ENCODE measurements at regions of chr5 and their contacts with region 1.

Region 1: DNA sequence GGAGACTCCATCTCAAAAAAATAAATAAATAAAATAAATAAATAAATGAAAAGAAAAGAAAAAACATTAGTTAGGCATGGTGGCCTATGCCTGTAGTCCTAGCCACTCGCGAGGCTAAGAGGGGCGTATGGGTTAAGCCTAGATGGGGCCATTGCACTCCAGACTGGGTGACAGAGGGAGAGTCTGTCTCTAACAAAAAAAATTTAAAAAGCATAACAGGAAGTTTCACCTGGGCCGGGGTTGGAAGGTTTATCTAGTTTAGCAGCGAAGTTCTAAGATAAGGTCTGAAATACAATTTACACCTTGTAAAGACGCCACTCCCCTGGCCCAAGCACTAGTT is 18.0 kb downstream of the ZMAT2 start:
- DNase-seq: no peak
- H3K4me3 ChIP-seq: peak overlapping the region; percentile 66
- H3K27ac ChIP-seq: peak overlapping the region; percentile 91
- H3K4me1 ChIP-seq: 0 out of 2 replicates have a peak, but pooled peaks cover 5% of the 10 kb centered on the region
- H3K27me3 ChIP-seq: no peaks in the 10 kb centered on the region
- CTCF ChIP-seq: no peak

Region 2: GRCh38 chr5:140244525-140245025 is 473.6 kb before region 1 on chr5:
- CTCF ChIA-PET with region 1: no interaction called
- POLR2A ChIA-PET with region 1: no interaction called
- intact Hi-C with region 1: loop called (anchors 5 kb)
- DNase-seq: peak; percentile 77 to 82
- H3K4me3 ChIP-seq: no peak overlapping the region
- H3K27ac ChIP-seq: no peak overlapping the region
- H3K4me1 ChIP-seq: peaks cover 45% of the 10 kb centered on the region
- H3K27me3 ChIP-seq: no peaks in the 10 kb centered on the region
- CTCF ChIP-seq: peak; percentile 91

Region 3: GRCh38 chr5:140372971-140373487 is 345.2 kb before region 1 on chr5:
- CTCF ChIA-PET with region 1: no interaction called
- POLR2A ChIA-PET with region 1: no interaction called
- intact Hi-C with region 1: loop called (anchors 1 kb)
- DNase-seq: peak; percentile 56 to 58
- H3K4me3 ChIP-seq: no peak overlapping the region
- H3K27ac ChIP-seq: no peak overlapping the region
- H3K4me1 ChIP-seq: no peaks in the 10 kb centered on the region
- H3K27me3 ChIP-seq: no peaks in the 10 kb centered on the region
- CTCF ChIP-seq: peak; percentile 86

Region 4: DNA sequence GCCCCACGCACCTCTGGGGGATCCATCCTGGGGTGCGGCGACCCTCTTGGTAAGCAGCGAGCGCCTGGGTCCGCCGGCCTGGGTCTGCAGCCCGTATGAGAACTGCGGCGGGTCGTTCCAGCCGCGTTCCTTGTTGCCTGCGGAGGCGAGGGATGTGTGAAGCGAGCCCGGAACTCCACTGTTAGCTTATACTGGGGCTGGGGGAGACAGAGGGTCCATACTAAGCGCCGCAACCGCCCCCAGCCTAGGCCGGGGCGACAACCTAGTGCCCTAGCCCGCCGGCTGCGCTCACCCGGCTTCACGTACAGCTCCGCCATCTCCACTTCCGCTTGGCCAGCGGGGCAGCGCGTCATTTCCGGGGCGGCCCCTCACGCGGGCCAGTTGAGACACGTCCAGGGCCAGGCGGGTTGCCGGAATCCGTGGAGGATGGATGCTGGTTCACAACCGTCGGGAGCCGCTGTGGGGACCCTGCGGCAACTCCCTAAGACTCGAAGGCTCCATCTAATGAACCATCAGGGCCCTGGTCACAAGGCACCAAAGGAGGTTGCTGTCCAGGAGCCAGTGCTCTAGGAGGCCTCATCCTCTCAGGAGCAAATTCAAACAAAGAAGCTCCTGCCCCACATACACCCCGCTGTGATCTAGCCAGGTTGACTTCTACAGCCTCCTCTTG is 160.9 kb before region 1 on chr5 and contains the start of gene SRA1:
- CTCF ChIA-PET with region 1: interaction called, 3 read pairs
- POLR2A ChIA-PET with region 1: interaction called, 7 read pairs
- intact Hi-C with region 1: loop called (anchors 2 kb)
- DNase-seq: peak; percentile 78 to 89
- H3K4me3 ChIP-seq: peak within 1 kb of the TSS; percentile 73
- H3K27ac ChIP-seq: peak within 1 kb of the TSS; percentile 39; the same call in 1 of the 2 replicates
- H3K4me1 ChIP-seq: peaks cover 10% of the 10 kb centered on the region
- H3K27me3 ChIP-seq: no peaks in the 10 kb centered on the region
- CTCF ChIP-seq: no peak
- total RNA-seq, gene SRA1: 30.5 and 36.1 TPM in 2 replicates

Region 5: DNA sequence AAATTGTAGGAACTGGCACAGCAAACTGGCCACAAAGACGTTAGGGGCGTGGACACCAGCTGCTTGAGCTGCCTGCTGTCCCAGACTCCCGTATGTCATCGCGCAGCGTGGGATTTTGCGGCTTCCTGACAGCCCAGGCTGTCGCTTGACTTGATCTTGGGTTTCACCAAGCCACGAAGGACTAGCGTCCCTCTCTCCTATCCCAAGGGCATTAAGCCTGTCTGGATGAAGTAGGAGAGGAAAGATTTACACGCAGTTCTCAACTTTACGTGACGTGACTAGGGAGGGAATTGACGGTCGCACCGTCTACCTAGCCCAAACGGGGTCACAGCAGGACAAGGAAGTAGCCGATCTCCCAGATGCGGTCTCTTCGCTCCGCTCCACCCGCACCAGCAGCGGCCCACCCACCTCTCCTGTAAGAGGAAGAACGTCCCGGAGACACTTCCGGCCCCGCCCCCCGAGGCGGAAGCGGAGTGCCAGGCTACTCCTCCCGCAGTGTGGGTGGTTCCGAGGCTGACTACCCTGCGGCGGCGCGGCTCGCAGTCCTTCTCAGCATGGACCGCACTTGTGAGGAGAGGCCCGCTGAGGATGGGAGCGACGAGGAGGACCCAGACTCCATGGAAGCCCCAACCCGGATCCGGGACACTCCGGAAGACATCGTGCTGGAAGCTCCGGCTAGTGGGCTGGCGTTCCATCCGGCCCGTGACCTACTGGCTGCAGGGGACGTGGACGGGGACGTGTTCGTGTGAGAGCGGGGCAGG is 53.7 kb before region 1 on chr5 and contains the start of gene WDR55:
- CTCF ChIA-PET with region 1: no interaction called
- POLR2A ChIA-PET with region 1: interaction called, 6 read pairs
- intact Hi-C with region 1: loop called (anchors 2 kb)
- DNase-seq: peak; percentile 91 to 95
- H3K4me3 ChIP-seq: peak within 1 kb of the TSS; percentile 87
- H3K27ac ChIP-seq: peak within 1 kb of the TSS; percentile 69
- H3K4me1 ChIP-seq: peaks cover 13% of the 10 kb centered on the region
- H3K27me3 ChIP-seq: no peaks in the 10 kb centered on the region
- CTCF ChIP-seq: no peak
- total RNA-seq, gene WDR55: 37.9 and 39.2 TPM in 2 replicates

Region 6: DNA sequence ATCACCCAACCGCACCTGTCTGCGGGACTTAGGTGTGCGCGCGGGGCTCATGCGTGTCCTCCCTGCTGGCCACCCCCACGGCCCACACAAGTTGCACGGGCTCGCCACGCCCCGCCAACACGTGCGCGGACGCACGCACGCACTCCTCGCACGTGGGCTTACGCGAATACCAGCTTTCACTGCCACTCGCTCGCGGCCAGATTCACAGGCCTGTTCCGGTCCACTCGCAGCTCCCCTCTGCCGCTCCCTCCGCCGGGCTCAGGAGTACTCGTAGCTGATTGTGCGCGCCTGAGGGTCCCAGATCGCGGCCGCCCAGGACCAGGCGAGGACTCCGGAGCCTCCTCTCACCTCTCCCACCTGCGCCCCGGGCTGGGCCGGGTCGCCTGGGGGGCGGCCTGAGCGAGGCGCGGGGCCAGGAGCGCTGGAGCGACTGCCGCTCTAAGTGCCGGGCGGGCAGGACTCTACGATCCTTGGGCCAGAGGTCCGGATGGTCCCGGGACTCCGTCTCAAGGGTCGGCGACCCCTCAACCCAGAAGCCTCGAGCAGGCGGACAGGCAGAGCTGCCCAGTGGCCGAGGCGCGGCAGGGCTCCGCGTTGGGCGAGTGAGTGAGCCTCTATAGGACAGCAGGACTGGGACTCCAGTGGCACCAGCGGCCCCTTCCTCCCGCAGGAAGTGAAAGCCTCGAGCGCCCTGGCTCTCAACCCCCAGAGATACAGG is 774.1 kb after region 1 on chr5:
- CTCF ChIA-PET with region 1: no interaction called
- POLR2A ChIA-PET with region 1: no interaction called
- intact Hi-C with region 1: no loop called
- DNase-seq: no peak
- H3K4me3 ChIP-seq: no peak overlapping the region
- H3K27ac ChIP-seq: no peak overlapping the region
- H3K4me1 ChIP-seq: no peaks in the 10 kb centered on the region
- H3K27me3 ChIP-seq: peaks cover 37% of the 10 kb centered on the region
- CTCF ChIP-seq: no peak